Activated CD8-positive, alpha-beta T cell treated with anti-CD3 and anti-CD28 coated beads for 36 hours (primary cell): ENCODE measurements at regions of chr6 and their contacts with region 1.

Region 1: GRCh38 chr6:116561377-116562018 is 7.9 kb downstream of the CALHM4 start:
- DNase-seq: peak; percentile 84
- ATAC-seq: peak; percentile 83
- H3K4me3 Mint-ChIP-seq: no peak overlapping the region
- H3K27ac Mint-ChIP-seq: no peak overlapping the region
- H3K4me1 Mint-ChIP-seq: no peaks in the 10 kb centered on the region
- H3K27me3 Mint-ChIP-seq: peaks cover 2% of the 10 kb centered on the region
- CTCF ChIP-seq: peak; percentile 82

Region 2: DNA sequence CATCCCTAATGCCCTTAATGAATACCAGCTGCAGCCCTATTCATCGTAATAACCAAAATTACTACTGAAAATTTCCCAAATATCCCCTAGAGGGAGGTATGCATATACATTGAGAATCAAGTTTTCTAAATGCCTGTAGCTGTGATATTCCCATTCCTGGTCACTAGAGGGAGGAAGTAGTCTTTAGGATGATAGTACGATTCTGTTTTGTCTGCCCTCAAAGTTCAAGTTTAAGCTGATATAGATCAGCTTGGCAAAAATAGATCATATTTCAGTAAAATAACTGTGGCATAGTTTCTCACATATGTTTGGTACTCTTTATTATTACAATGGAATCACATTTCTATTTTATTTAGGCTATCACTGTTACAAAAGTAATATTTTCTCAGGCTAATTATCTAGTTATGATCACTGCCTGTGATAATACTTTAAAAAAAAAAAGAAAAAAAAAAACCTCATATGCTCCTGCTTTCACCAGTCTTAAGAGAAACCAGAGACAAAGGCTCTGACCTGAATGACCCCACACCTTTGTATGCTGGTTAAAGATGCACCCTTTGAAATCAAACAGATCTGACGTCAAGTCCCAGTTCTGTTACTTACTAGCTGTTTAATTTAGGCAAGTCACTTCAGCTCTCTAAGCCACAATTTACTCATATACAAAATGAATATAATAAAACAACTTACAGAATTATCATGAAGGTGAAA is 292.8 kb before region 1 on chr6:
- CTCF ChIA-PET with region 1: interaction called, 14 read pairs
- POLR2A ChIA-PET with region 1: no interaction called
- intact Hi-C with region 1: no loop called
- DNase-seq: no peak
- ATAC-seq: peak; percentile 68
- H3K4me3 Mint-ChIP-seq: no peak overlapping the region
- H3K27ac Mint-ChIP-seq: peak overlapping the region; percentile 43
- H3K4me1 Mint-ChIP-seq: peaks cover 33% of the 10 kb centered on the region
- H3K27me3 Mint-ChIP-seq: no peaks in the 10 kb centered on the region
- CTCF ChIP-seq: peak; percentile 66

Region 3: DNA sequence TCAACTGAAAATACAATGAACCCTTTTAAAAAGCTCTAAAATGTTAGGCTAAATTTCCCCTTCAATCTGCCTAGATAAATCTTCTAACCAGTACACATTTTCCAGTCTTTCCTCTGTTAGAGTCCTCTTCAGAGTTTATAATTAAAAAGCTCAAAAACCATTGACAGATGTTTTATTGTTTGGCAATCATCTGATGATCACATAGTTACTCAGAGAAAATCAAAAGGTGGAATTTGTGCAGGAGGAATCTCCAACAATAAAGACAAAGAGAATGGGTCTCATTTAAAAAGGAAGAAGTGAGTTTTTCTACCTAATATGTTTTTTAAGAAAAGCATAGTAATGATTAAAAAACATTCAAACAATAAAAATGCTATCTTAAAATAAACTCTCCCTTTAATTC is 19.1 kb before region 1 on chr6:
- CTCF ChIA-PET with region 1: interaction called, 38 read pairs
- POLR2A ChIA-PET with region 1: no interaction called
- intact Hi-C with region 1: no loop called
- DNase-seq: no peak
- ATAC-seq: no peak
- H3K4me3 Mint-ChIP-seq: no peak overlapping the region
- H3K27ac Mint-ChIP-seq: no peak overlapping the region
- H3K4me1 Mint-ChIP-seq: no peaks in the 10 kb centered on the region
- H3K27me3 Mint-ChIP-seq: peaks cover 13% of the 10 kb centered on the region
- CTCF ChIP-seq: no peak